ENCODE measurements at regions of chr7 and their contacts with region 1.

Region 1: DNA sequence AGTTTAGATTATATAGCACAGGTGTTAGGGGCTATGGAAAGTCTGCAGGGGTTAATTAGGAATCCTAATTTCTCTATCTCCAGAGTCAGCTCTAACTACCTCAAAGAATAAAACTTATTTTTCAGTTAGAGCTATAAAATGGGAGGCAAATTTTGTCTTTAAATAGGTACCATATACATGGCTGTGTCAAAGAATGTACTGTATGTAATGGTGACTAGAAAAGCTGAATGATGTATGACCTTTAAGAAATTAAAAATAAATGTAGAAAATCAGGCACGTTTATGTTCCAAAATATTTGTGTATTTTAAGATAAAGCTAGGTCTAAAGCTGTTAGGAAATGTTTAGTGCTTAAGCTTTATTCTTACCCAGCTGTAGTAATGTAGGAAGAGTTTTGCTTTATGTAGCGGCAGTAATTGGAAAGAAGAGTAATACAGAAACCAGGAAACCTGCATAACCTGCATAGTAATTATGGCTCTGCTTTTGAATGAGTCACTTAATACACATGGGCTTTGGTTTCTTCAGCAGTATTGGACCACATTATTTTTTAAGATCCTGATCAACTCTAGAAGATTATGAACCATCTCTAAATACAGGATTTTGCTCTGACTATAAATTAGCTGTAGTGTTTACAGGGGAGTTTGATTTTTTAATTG is 85.0 kb downstream of the KMT2E start:
- DNase-seq: no peak
- H3K4me3 Mint-ChIP-seq: no peak overlapping the region
- H3K27ac Mint-ChIP-seq: peak overlapping the region; percentile 48
- H3K4me1 Mint-ChIP-seq: peaks cover 39% of the 10 kb centered on the region
- H3K27me3 Mint-ChIP-seq: no peaks in the 10 kb centered on the region

Region 2: DNA sequence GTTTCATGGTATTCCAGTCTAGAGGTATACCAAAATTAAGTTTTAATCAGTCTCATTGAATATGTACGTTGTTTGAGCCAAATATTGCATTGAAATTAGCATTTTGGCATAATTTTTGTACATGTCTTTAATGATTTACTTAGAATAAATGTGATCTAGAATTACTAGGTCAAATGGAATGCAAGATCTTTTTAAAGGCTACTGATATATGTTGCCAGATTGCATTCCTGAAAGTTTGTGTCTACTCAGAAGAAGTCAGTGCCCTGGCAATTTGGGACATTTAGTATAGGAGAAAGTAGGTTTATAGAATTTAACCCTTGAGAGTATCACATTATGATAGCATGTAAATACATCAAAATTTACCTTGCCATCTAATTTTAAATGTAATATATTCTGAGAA is 52.6 kb before region 1 on chr7:
- intact Hi-C with region 1: loop called (anchors 10 kb)
- DNase-seq: no peak
- H3K4me3 Mint-ChIP-seq: no peak overlapping the region
- H3K27ac Mint-ChIP-seq: no peak overlapping the region
- H3K4me1 Mint-ChIP-seq: peaks cover 26% of the 10 kb centered on the region
- H3K27me3 Mint-ChIP-seq: no peaks in the 10 kb centered on the region

Region 3: GRCh38 chr7:105522062-105522936 is 423.3 kb after region 1 on chr7 and contains the start of gene PUS7:
- intact Hi-C with region 1: loop called (anchors 5 kb)
- DNase-seq: peak; percentile 92
- H3K4me3 Mint-ChIP-seq: peak within 1 kb of the TSS; percentile 99
- H3K27ac Mint-ChIP-seq: peak within 1 kb of the TSS; percentile 99
- H3K4me1 Mint-ChIP-seq: peaks cover 15% of the 10 kb centered on the region
- H3K27me3 Mint-ChIP-seq: no peaks in the 10 kb centered on the region
- total RNA-seq, gene PUS7: 51.9 and 54.5 TPM in 2 replicates

Region 4: GRCh38 chr7:106089647-106090046 is 990.7 kb after region 1 on chr7:
- intact Hi-C with region 1: no loop called
- DNase-seq: no peak
- H3K4me3 Mint-ChIP-seq: no peak overlapping the region
- H3K27ac Mint-ChIP-seq: no peak overlapping the region
- H3K4me1 Mint-ChIP-seq: peaks cover 3% of the 10 kb centered on the region
- H3K27me3 Mint-ChIP-seq: no peaks in the 10 kb centered on the region

Measured in activated CD4-positive, alpha-beta T cell treated with anti-CD3 and anti-CD28 coated beads, Interleukin-2, amount 10 ng/mL, durations not matched to agents 24 days and 14 days (primary cell).